ENCODE measurements at regions of chr22 and their contacts with region 1.

Region 1: DNA sequence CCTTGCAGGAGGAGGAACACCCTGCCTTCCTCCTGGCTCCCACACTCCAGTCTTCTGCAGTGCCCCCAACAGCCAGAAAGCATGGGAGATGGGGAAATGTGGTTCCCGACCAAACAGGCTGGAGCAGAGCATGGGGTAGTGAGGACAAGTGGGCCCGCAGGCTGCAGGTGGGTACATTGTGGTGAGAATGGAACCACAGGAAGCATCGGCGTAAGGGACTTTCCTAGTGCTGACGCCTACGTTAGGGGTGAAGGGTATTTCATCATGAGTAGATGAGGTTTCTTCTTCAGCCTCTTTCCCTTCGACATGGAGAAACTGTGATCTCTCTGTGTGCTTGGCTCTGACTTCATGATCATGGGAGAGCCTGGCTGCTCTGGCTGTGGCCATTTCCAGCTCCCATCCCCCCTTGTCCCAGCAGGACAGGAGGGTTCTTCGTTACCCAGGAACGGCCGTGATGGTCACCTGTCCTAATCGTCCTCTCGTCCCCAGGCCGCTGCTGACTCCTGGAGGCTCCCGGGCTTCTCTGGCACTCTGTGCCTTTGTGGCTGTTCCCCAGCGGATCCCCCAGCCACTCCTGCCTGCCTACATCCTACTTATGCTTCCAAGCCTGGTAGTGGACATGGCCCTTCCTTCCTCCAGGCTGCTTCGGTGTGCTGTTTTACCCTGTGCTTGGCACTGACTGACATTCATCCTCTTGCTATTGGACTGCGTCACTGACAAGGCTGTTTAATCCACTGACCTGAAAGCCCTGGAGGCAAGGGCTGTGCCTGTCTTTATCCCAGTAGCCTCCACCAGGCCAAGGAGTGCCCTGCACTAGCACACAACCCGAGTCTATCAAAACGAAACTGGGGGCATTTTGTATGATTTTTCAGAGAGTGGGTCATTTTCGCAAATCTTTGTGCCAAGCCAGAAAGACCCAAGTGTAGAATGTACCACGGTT is 65.2 kb upstream of the CECR2 start:
- DNase-seq: no peak
- ATAC-seq: no peak
- H3K4me3 ChIP-seq: no peak overlapping the region
- H3K27ac ChIP-seq: no peak overlapping the region
- H3K4me1 ChIP-seq: no peaks in the 10 kb centered on the region
- H3K27me3 ChIP-seq: no peaks in the 10 kb centered on the region
- CTCF ChIP-seq: no peak
- POLR2A ChIP-seq: no peak

Region 2: GRCh38 chr22:17283423-17283822 is 20.7 kb before region 1 on chr22:
- intact Hi-C with region 1: loop called in 3 of 10 experiments (anchors 1 to 2 kb)
- DNase-seq: no peak
- ATAC-seq: no peak
- H3K4me3 ChIP-seq: no peak overlapping the region
- H3K27ac ChIP-seq: no peak overlapping the region
- H3K4me1 ChIP-seq: peaks cover 0 to 18% (median 0%) of the 10 kb centered on the region in 12 donors
- H3K27me3 ChIP-seq: peaks cover 0 to 9% (median 0%) of the 10 kb centered on the region in 9 donors
- CTCF ChIP-seq: no peak
- POLR2A ChIP-seq: no peak

Region 3: GRCh38 chr22:17576470-17576869 is 272.4 kb after region 1 on chr22:
- intact Hi-C with region 1: no loop called
- DNase-seq: peak in 1 of 5 donors; percentile 71
- ATAC-seq: peak; percentile 48 to 78 (median 64)
- H3K4me3 ChIP-seq: no peak overlapping the region
- H3K27ac ChIP-seq: peak overlapping the region in 5 of 12 donors; percentile 22 to 87 (median 37)
- H3K4me1 ChIP-seq: peaks cover 2 to 35% (median 6%) of the 10 kb centered on the region in 12 donors
- H3K27me3 ChIP-seq: no peaks in the 10 kb centered on the region
- CTCF ChIP-seq: no peak
- POLR2A ChIP-seq: no peak